Posterior cingulate gyrus (tissue), 11 donors: ENCODE measurements at regions of chr6 and their contacts with region 1.

Region 1: DNA sequence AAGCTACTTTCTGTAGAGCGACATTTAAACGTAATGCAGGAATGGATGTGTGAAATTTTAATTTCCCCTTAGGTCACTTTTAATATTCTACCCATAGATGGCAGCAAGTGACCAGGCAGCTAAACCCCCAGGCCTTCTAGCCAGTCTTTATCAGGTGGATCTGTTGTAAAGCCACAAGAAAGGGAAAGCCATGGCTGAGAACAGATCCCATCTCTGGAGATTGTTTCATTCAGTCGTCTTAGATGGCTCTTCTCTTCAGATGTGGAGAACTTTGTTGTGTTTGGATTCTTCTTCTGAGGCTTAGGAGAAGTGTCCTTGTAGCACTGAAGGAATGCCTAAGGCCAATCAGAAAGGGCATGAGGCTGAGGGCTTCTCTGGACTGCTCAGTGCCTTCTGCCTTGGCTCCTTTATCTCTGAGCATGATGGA is 15.8 kb upstream of the RNF182 start:
- DNase-seq: peak in 4 of 10 donors; percentile 20 to 72 (median 30)

Region 2: GRCh38 chr6:14066782-14067406 is 157.9 kb after region 1 on chr6:
- intact Hi-C with region 1: loop called (anchors 1 kb)
- DNase-seq: no peak

Region 3: GRCh38 chr6:14144678-14145113 is 235.7 kb after region 1 on chr6:
- intact Hi-C with region 1: loop called (anchors 1 kb)
- DNase-seq: peak in 8 of 10 donors; percentile 42 to 91 (median 62)